Uterus (tissue), 4 donors: ENCODE measurements at regions of chr17 and their contacts with region 1.

Region 1: DNA sequence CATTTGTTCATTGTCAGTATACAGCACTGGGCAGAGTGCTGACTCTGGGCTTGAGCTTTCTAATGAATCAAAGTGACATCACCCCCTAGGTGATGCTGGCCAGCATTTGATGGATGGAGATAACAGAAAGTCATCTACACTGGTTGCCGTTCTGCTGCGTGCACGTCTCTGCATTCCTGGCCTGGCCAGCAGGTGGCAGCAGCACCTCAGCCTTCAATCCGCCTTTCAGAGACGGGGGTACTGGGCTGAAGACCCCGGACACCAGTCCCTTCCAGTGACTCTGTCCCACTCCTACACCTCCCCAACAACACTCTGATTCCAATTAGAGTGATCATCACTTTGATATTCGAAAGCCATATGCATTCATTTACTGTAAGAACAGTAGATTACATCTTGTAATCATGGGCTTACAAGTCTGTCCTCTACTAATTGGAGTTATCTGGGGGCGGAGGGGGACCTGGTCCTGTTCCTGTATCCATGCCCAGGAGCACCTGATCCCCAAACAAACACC is 6.0 kb downstream of the CPSF4L start:
- DNase-seq: peak; percentile 62 to 63
- H3K4me3 ChIP-seq: no peak overlapping the region
- H3K27ac ChIP-seq: no peak overlapping the region
- H3K4me1 ChIP-seq: no peaks in the 10 kb centered on the region
- H3K27me3 ChIP-seq: no peaks in the 10 kb centered on the region
- CTCF ChIP-seq: peak; percentile 97 to 99 (median 98)
- POLR2A ChIP-seq: peak in 1 of 2 donors; percentile 15

Region 2: DNA sequence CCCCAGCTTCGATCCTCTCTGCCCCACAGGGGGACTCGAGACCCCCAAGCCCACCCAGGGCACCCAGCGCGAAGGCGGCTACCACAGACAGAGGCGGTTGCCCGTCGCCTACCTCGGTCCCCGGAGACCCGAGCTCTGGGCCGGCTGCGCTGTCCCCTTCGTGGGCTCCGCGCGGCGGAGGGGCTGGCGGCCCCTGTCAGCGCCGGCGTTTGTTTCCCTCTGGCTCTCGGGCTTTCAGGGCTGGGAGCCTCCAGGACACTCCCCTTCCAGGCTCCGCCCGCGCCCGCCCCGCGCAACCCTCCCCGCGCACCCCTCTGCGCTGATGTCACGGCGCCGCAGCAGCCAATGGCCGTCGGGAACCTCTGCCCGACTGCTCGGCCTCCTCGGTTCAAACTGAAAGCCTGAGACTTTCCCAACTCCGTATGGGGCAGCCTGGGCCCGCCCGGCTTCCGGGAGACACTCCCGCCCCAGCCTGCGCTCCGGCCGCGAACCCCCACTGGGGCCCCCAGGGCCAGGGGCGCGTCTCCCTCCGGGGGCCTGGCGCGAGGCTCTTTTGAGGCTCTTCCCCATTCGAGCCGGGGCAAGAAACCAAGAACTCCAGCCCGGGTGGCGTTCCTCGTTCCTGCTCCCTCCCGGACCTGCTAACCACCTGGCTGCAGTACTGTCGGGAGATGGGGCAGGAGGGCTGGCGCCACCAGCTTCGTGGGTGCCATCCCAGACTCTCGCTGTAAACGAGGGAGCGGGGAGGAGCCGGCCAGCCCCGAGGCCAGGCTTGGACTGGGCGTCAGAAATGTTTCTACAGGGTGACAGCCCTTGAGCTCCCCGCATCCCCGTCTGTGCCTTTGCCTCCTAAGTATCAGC is 56.3 kb after region 1 on chr17 and contains the start of gene CDC42EP4:
- intact Hi-C with region 1: loop called (anchors 10 kb)
- DNase-seq: peak; percentile 96 to 98
- H3K4me3 ChIP-seq: peak within 1 kb of the TSS; percentile 68 to 98
- H3K27ac ChIP-seq: peak within 1 kb of the TSS; percentile 97 to 99
- H3K4me1 ChIP-seq: no peaks in the 10 kb centered on the region
- H3K27me3 ChIP-seq: no peaks in the 10 kb centered on the region
- CTCF ChIP-seq: peak in 1 of 4 experiments; percentile 8
- POLR2A ChIP-seq: peak; percentile 98 to 100
- total RNA-seq, gene CDC42EP4: 26.6 to 131 (median 70.7) TPM

Region 3: GRCh38 chr17:73369111-73369521 is 113.4 kb after region 1 on chr17:
- intact Hi-C with region 1: loop called (anchors 2 kb)
- DNase-seq: no peak
- H3K4me3 ChIP-seq: no peak overlapping the region
- H3K27ac ChIP-seq: no peak overlapping the region
- H3K4me1 ChIP-seq: no peaks in the 10 kb centered on the region
- H3K27me3 ChIP-seq: no peaks in the 10 kb centered on the region
- CTCF ChIP-seq: no peak
- POLR2A ChIP-seq: no peak